ENCODE measurements at regions of chr9 and their contacts with region 1.

Region 1: GRCh38 chr9:14314929-14315645 is 1.1 kb upstream of the NFIB start:
- DNase-seq: peak; percentile 67
- H3K4me3 ChIP-seq: peak overlapping the region; percentile 61 to 87 (median 85)
- H3K27ac ChIP-seq: peak overlapping the region; percentile 96
- H3K4me1 ChIP-seq: peaks cover 55% of the 10 kb centered on the region
- H3K27me3 ChIP-seq: no peaks in the 10 kb centered on the region
- CTCF ChIP-seq: no peak
- POLR2A ChIP-seq: no peak

Region 2: GRCh38 chr9:13213337-13213736 is 1101.8 kb before region 1 on chr9:
- CTCF ChIA-PET with region 1: no interaction called
- POLR2A ChIA-PET with region 1: no interaction called
- dilution Hi-C with region 1: no loop called
- intact Hi-C with region 1: loop called (anchors 2 kb)
- DNase-seq: peak; percentile 44
- H3K4me3 ChIP-seq: no peak overlapping the region
- H3K27ac ChIP-seq: no peak overlapping the region
- H3K4me1 ChIP-seq: peaks cover 27% of the 10 kb centered on the region
- H3K27me3 ChIP-seq: no peaks in the 10 kb centered on the region
- CTCF ChIP-seq: peak in 1 of 2 donors; percentile 22
- POLR2A ChIP-seq: no peak

Region 3: DNA sequence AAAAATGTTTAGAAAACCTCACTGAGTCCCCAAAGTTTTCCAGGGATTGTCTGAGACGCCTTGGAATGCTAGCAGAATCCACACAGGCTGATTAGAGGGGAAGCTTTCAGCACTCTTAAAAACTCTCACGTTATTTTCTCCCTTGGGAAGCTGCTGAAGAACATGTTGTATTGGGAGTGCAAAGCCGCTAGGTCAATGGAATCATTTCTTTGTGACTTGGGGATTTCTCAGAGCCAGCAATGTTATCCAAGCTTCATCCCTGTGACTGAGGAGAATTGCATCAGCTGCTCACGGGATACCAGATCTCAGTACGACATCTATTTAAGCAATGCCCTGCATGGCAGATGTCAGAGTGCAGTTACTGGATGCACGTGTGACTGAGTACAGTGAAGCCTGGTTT is 609.2 kb before region 1 on chr9:
- CTCF ChIA-PET with region 1: no interaction called
- POLR2A ChIA-PET with region 1: no interaction called
- dilution Hi-C with region 1: no loop called
- intact Hi-C with region 1: loop called (anchors 2 kb)
- DNase-seq: peak; percentile 81
- H3K4me3 ChIP-seq: no peak overlapping the region
- H3K27ac ChIP-seq: peak overlapping the region; percentile 80
- H3K4me1 ChIP-seq: peaks cover 39% of the 10 kb centered on the region
- H3K27me3 ChIP-seq: no peaks in the 10 kb centered on the region
- CTCF ChIP-seq: no peak
- POLR2A ChIP-seq: no peak

Region 4: DNA sequence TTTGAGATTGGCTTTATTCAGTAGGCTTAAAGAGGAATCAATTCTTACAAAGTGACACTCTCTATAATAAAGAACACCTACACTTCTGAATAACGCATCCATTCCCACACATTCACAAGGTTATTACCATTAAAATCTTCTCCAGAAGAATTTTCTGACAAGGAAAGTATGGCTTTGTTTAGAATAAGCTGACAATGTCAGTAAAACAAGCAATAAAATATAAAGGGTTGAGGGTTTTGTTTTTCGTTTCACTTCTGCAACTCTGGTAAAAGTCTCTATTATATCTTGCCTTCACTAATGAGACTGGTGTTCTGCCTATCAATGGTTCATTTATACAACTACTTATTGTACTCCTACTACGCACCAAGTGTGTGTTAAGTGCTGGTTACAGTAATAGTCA is 170.9 kb before region 1 on chr9:
- CTCF ChIA-PET with region 1: no interaction called
- POLR2A ChIA-PET with region 1: no interaction called
- dilution Hi-C with region 1: no loop called
- intact Hi-C with region 1: no loop called
- DNase-seq: no peak
- H3K4me3 ChIP-seq: no peak overlapping the region
- H3K27ac ChIP-seq: no peak overlapping the region
- H3K4me1 ChIP-seq: no peaks in the 10 kb centered on the region
- H3K27me3 ChIP-seq: no peaks in the 10 kb centered on the region
- CTCF ChIP-seq: no peak
- POLR2A ChIP-seq: no peak

Region 5: DNA sequence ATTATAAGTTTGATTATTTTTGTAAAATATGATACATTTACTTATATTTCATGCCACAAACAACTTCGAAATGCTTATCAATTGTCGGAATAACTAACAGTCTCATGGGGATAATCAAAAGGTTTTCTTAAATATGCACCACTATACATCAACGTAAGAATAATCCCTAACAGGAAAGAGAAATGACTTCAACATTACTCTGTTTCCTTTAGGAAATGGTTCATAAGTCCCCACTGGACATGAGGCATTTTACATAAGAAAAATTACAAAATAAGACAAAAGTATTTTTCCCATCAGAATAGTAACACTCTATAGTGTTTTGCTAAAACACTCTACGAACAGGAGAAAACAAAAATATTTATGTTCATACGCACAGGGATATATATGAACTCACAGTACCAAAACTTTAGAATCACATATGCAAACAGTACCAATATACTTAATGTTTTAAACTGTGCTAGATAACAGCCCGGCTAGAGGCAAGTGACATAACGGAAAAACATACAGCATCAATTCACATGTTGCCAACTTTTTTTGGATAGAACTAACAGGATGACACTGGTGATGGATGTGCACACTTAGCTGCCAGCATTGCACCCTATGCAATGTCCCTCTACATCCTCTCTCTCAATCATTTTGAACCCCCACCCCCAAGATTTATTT is 121.6 kb before region 1 on chr9:
- CTCF ChIA-PET with region 1: interaction called, 3 read pairs
- POLR2A ChIA-PET with region 1: no interaction called
- dilution Hi-C with region 1: no loop called
- intact Hi-C with region 1: loop called (anchors 2 kb)
- DNase-seq: peak; percentile 90
- H3K4me3 ChIP-seq: peak overlapping the region in 2 of 3 experiments; percentile 21 to 55
- H3K27ac ChIP-seq: peak overlapping the region; percentile 97
- H3K4me1 ChIP-seq: peaks cover 64% of the 10 kb centered on the region
- H3K27me3 ChIP-seq: no peaks in the 10 kb centered on the region
- CTCF ChIP-seq: no peak
- POLR2A ChIP-seq: no peak

Region 6: GRCh38 chr9:14271093-14271673 is 43.9 kb before region 1 on chr9:
- CTCF ChIA-PET with region 1: interaction called, 8 read pairs
- POLR2A ChIA-PET with region 1: interaction called, 4 read pairs
- dilution Hi-C with region 1: no loop called
- intact Hi-C with region 1: loop called (anchors 1 kb)
- DNase-seq: peak; percentile 95
- H3K4me3 ChIP-seq: peak overlapping the region in 1 of 3 experiments; percentile 33
- H3K27ac ChIP-seq: peak overlapping the region; percentile 46
- H3K4me1 ChIP-seq: peaks cover 64% of the 10 kb centered on the region
- H3K27me3 ChIP-seq: no peaks in the 10 kb centered on the region
- CTCF ChIP-seq: no peak
- POLR2A ChIP-seq: no peak

Region 7: DNA sequence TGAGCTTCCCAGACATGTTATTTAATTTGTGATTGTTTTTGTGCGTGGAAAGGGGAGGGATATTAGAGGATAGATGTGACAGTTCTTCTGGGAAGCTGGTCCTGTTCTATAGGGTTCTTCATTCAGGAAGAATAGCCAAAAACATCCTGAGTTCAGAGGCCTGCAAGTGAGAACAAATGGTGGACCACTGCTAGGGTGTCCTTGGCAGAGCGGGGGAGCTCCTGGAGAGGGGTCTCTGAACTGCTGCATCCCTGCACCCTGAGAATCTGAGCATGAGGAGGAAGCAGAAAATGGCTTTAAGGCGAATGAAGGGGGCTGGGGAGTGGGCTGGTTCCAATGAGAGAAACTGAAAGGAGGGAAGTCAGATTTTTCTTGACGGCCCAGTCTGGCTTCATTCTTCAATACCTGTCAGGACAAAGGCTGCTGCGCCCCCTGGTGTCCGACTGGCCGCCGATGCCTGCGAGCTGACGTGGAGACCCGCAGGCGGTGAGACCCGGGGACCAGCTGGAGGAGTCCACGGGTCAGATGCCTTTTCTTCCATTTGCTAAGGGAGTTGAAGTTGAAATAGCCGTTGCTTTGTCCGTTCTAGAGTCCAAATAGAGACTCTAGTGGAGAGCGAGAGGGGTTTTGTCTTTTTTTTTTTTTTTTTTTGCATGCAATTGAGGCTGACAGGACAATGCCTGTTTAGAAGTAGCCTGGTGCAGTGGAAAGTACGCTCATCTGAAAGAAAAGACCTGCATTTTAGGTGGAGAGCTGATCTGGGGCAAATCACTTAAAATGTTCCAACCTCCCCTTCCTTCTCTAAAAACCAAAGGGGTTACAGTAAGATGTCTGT is 38.4 kb after region 1 on chr9:
- CTCF ChIA-PET with region 1: interaction called, 25 read pairs
- POLR2A ChIA-PET with region 1: interaction called, 6 read pairs
- dilution Hi-C with region 1: no loop called
- intact Hi-C with region 1: loop called (anchors 1 kb)
- DNase-seq: peak; percentile 89
- H3K4me3 ChIP-seq: no peak overlapping the region
- H3K27ac ChIP-seq: peak overlapping the region; percentile 2
- H3K4me1 ChIP-seq: peaks cover 45% of the 10 kb centered on the region
- H3K27me3 ChIP-seq: no peaks in the 10 kb centered on the region
- CTCF ChIP-seq: peak; percentile 95 to 97
- POLR2A ChIP-seq: no peak